ENCODE measurements at regions of chr18 and their contacts with region 1.

Region 1: DNA sequence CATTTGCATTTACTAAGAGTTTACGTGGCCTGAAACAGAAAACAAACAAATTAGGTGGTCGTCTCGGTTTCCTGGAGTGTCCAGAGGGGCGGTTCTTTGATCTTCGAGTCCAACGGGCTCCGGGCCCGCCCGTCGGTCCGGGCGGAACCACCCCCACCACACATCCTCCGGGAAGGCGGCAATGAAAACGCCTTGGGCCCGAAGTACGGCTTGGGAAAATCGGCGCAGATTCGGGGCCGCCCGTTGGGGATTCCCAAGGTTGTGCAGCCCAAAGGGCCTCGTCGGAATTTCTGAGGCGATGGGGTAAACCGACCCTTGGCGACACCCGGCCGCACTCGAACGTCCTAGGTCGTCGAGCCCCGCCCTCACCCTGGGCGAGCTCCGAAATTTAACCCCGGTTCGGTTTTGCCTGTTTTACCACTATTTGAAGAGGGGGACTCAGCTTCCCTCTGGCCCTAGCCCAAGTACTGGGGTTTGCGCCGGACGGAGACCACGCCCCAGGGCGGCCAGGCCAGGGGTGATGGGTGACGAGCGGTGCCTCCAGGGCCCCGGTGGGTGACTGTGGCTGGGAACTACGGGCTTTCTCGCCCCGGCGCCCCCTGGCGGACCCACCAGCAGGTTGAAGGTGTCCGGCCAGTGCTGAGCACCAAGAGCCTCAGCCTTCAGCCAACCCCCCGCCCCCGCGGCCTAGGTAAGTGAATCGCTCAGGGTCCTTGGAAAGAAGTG is 1.9 kb upstream of the CFAP53 start:
- DNase-seq: peak; percentile 75 to 94
- H3K4me3 ChIP-seq: peak overlapping the region; percentile 59 to 81 (median 68)
- H3K27ac ChIP-seq: no peak overlapping the region
- H3K4me1 ChIP-seq: peaks cover 0 to 7% (median 0%) of the 10 kb centered on the region in 4 experiments; a peak in 3 of 7 replicates
- H3K27me3 ChIP-seq: no peaks in the 10 kb centered on the region; a peak in 1 of 7 replicates
- CTCF ChIP-seq: peak; percentile 82 to 86 (median 83)
- EP300 ChIP-seq: no peak
- POLR2A ChIP-seq: peak in 1 of 2 experiments; percentile 56; a peak in 1 of 3 replicates
- RAD21 ChIP-seq: peak; percentile 54 to 73

Region 2: GRCh38 chr18:50183556-50183955 is 84.6 kb before region 1 on chr18:
- CTCF ChIA-PET with region 1: no interaction called
- POLR2A ChIA-PET with region 1: no interaction called
- DNase-seq: no peak
- H3K4me3 ChIP-seq: no peak overlapping the region
- H3K27ac ChIP-seq: no peak overlapping the region
- H3K4me1 ChIP-seq: no peaks in the 10 kb centered on the region
- H3K27me3 ChIP-seq: no peaks in the 10 kb centered on the region
- CTCF ChIP-seq: no peak
- EP300 ChIP-seq: no peak
- POLR2A ChIP-seq: no peak
- RAD21 ChIP-seq: no peak

Region 3: DNA sequence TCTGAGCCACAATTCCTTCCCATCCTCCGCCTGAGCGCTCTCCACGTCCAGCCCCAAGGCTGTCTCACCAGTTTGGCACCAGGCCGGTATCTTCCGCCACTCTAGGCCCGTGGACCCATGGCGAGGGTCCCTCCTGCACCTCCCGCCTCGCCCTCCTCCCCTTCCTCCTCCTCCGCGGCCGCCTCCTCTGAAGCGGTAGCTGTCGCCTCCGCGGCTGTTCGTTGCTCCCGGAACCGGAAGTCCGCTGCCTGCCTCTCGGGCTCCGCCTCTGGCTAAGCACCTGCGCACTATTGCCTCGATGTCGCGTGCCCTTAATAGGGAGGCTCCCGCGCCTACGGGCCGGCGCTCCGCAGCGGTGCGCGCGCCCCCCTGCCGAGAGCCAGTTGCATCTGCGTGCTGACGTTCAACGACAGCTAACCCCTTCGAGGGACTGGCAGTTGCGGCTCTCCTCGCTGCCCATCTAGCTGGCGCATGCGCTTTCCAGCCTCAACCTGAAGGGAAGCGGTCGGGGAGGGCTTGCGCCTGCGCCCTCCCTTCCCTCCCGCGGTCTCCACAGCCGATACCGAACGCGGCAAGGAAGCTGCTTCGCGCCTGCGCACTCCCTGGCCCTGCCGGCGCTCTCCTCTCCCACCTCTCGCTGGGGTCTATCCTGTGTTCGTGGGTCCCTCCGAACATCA is 13.2 kb after region 1 on chr18 and contains the start of gene MBD1:
- CTCF ChIA-PET with region 1: interaction called, 15 read pairs
- POLR2A ChIA-PET with region 1: interaction called, 6 read pairs
- DNase-seq: peak; percentile 92 to 93
- H3K4me3 ChIP-seq: peak within 1 kb of the TSS; percentile 93 to 97 (median 94)
- H3K27ac ChIP-seq: peak within 1 kb of the TSS; percentile 74
- H3K4me1 ChIP-seq: peaks cover 0 to 11% (median 4%) of the 10 kb centered on the region in 4 experiments; a peak in 5 of 7 replicates
- H3K27me3 ChIP-seq: no peaks in the 10 kb centered on the region
- CTCF ChIP-seq: peak in 2 of 3 experiments; percentile 6 to 10; a peak in 2 of 4 replicates
- EP300 ChIP-seq: no peak
- POLR2A ChIP-seq: no peak; a peak in 1 of 3 replicates
- RAD21 ChIP-seq: no peak
- total RNA-seq, gene MBD1: 39.5 and 41.6 TPM in 2 replicates

Measured in H1 (cell line).